Ascending aorta (tissue), 2 donors: ENCODE measurements at regions of chr17 and their contacts with region 1.

Region 1: GRCh38 chr17:75034236-75034908 is 12.4 kb downstream of the ATP5PD start:
- DNase-seq: peak; percentile 69 to 95
- H3K4me3 ChIP-seq: peak overlapping the region; percentile 76 to 79
- H3K27ac ChIP-seq: peak overlapping the region; percentile 91 to 95
- H3K4me1 ChIP-seq: peaks cover 0 to 19% of the 10 kb centered on the region in 2 donors
- H3K27me3 ChIP-seq: no peaks in the 10 kb centered on the region
- CTCF ChIP-seq: no peak

Region 2: DNA sequence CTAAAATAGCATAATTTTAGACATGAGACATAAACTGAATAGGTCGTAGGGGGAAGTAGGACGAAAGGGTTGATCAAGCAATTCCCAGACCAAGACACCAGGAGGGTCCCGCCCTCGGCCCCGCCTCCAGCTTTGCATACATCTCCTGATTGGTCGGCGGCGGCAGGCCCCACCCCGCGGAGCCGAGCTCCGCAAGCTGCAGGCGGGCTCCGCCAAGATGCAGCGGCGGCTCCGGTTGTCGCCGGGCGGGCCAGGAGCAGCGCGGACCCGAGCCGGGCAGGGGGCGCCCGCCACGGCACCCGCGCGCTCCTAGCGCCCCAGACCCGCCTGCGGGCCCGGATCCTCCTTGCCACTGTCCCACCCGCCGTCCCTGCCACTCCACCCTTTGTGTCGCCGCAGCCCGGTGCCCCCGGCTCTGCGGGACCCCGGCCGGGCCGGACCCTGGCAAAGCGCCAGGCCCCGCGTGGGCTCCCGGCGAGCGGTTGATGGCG is 46.9 kb before region 1 on chr17 and contains the start of gene CDR2L:
- intact Hi-C with region 1: loop called (anchors 1 kb)
- DNase-seq: peak; percentile 90 to 99
- H3K4me3 ChIP-seq: peak within 1 kb of the TSS; percentile 82 to 95
- H3K27ac ChIP-seq: peak within 1 kb of the TSS; percentile 98 to 99
- H3K4me1 ChIP-seq: peaks cover 3 to 9% of the 10 kb centered on the region in 2 donors
- H3K27me3 ChIP-seq: no peaks in the 10 kb centered on the region
- CTCF ChIP-seq: no peak
- total RNA-seq, gene CDR2L: 54.7 TPM

Region 3: GRCh38 chr17:75012346-75013091 is 21.9 kb before region 1 on chr17 and contains the start of gene MRPL58:
- intact Hi-C with region 1: loop called (anchors 1 kb)
- DNase-seq: peak in 1 of 2 donors; percentile 89
- H3K4me3 ChIP-seq: peak within 1 kb of the TSS; percentile 68 to 88
- H3K27ac ChIP-seq: peak within 1 kb of the TSS; percentile 83 to 91
- H3K4me1 ChIP-seq: peaks cover 4 to 18% of the 10 kb centered on the region in 2 donors
- H3K27me3 ChIP-seq: no peaks in the 10 kb centered on the region
- CTCF ChIP-seq: peak; percentile 59 to 66 (median 63)
- total RNA-seq, gene MRPL58: 14.5 TPM

Region 4: DNA sequence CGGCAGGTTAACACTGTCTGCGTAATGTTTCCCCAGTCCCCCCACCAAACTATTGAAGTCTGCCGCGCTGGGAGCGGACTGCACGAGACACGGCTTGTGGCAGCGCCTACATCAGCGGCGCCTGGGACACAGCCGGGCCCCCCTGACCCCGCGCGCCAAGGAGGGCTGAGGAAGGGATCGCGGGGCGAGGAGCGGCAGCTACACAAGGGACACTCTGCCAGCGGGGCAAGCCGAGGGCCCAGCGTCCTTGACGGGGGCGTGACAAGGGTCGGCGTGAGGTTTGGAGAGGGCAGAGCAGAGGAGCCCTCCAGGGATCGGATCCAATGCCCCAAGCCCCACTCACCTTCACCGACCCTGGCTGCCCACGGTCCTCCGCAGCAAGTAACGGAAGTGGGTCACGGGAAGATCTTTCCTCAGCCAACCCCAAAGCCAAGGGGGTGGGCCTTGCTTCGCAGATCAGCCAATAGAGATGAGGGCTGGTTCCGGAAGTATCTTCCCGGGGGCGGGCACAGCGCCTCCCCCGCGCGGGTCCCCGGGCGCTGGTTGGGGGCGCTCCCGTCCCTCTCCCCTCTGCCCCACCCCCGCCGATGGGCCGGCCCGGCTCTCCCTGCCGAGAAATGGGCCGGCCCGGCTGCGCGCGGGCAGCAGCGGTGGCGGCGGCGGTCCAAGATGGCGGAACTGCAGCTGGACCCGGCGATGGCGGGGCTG is 12.4 kb after region 1 on chr17 and contains the starts of genes ATP5PD and KCTD2:
- intact Hi-C with region 1: loop called (anchors 1 kb)
- DNase-seq: peak; percentile 88 to 98
- H3K4me3 ChIP-seq: peak within 1 kb of the TSS; percentile 64 to 74
- H3K27ac ChIP-seq: peak within 1 kb of the TSS; percentile 90
- H3K4me1 ChIP-seq: peaks cover 9 to 13% of the 10 kb centered on the region in 2 donors
- H3K27me3 ChIP-seq: no peaks in the 10 kb centered on the region
- CTCF ChIP-seq: no peak
- total RNA-seq, gene ATP5PD: 133 TPM
- total RNA-seq, gene KCTD2: 31.4 TPM

Region 5: GRCh38 chr17:75182569-75183450 is 148.4 kb after region 1 on chr17 and contains the start of gene SUMO2:
- intact Hi-C with region 1: loop called (anchors 5 kb)
- DNase-seq: peak; percentile 70 to 97
- H3K4me3 ChIP-seq: peak within 1 kb of the TSS; percentile 80 to 97
- H3K27ac ChIP-seq: peak within 1 kb of the TSS; percentile 94 to 100
- H3K4me1 ChIP-seq: peaks cover 6 to 18% of the 10 kb centered on the region in 2 donors
- H3K27me3 ChIP-seq: no peaks in the 10 kb centered on the region
- CTCF ChIP-seq: peak in 2 of 3 experiments; percentile 43 to 45
- total RNA-seq, gene SUMO2: 23.9 TPM

Region 6: GRCh38 chr17:75515496-75516254 is 481.3 kb after region 1 on chr17 and contains the start of gene CASKIN2:
- intact Hi-C with region 1: loop called (anchors 10 kb)
- DNase-seq: peak; percentile 77 to 96
- H3K4me3 ChIP-seq: peak within 1 kb of the TSS; percentile 78 to 82
- H3K27ac ChIP-seq: peak within 1 kb of the TSS; percentile 74 to 88
- H3K4me1 ChIP-seq: peaks cover 25 to 41% of the 10 kb centered on the region in 2 donors
- H3K27me3 ChIP-seq: no peaks in the 10 kb centered on the region
- CTCF ChIP-seq: peak; percentile 99 to 100 (median 99)
- total RNA-seq, gene CASKIN2: 112 TPM

Region 7: DNA sequence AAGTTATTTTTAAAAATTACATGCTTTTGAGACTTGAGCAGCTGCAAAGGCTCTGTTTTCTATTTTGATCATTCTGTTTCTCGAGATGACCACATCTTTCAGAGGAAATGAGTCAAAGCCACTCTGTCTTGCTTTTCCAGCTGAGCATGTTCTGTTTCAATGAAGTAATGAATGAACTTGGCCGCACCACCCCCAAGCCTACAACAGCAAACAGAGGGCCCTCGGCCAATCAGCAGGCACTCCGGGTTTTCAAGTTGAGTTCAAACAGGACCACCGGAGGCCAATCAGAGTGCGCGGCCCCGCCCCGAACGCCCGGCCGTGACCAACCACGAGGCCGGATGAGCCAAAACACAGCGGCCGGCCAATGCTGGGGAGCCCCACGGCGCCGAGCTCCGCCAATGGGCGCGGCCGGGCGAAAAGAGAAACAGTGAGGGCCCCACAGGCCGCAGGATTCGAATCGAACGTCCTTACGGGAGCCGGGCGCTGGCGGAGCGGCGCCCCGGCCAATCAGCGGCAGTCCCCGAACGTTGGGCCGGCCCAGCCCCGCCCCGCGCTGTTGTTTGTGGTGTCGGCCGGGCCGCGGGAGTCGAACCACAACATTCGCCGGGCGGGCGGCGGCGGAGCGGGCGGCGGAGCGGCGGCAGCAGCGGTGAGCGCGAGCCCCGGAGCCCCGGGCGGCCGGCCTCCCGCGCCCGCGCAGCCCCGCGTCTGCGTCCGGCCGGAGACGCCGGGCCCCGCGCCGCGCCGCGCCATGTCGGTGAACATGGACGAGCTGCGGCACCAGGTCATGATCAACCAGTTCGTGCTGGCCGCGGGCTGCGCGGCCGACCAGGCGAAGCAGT is 1230.6 kb after region 1 on chr17 and contains the start of gene UBALD2:
- intact Hi-C with region 1: loop called (anchors 10 kb)
- DNase-seq: peak; percentile 99 to 100
- H3K4me3 ChIP-seq: peak within 1 kb of the TSS; percentile 74 to 95
- H3K27ac ChIP-seq: peak within 1 kb of the TSS; percentile 89 to 90
- H3K4me1 ChIP-seq: peaks cover 0 to 26% of the 10 kb centered on the region in 2 donors
- H3K27me3 ChIP-seq: no peaks in the 10 kb centered on the region
- CTCF ChIP-seq: no peak
- total RNA-seq, gene UBALD2: 15.9 TPM